MCF 10A (cell line): ENCODE measurements at regions of chr11 and their contacts with region 1.

Region 1: DNA sequence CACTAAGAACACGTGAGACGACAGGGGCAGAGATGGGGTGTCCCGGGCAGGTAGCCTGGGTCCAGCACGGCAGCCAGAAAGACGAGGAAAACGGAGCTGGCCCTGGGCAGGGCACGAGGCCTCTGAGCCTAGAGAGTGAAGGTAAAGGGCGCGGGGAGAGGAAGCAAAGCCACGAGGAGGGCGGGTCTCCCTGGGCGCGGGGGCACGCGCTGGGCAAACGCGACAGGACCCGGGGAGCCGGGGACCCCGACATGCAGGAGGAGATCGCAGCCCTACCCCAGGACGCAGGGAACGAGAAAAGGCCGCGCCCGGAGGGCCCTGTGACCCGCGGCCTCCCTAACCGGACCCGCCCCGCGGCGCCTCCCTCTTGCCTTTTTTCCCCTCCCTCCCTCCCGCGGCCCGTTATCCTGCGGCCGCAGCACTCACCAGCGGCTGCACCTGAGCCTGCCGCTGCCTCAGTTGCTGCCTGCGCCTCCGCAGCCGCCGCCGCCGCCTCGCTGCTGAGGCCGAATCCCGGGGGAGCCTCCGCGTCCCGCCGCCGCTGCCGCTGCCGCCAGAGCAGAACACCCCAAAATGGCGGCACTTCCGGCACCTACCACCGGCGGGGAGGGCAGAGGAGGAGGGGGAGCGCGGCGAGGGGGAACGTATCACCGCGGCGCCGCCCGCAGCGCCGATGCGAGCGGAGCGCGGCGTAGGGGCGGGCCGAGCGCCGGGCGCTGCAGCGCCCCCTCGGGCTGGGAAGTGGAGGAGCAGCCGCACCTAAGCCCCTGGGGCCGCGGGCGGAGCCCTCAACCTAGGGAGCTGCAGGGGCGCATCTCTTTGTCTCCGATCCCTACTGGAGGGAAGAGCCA is at the start of gene CELF1:
- DNase-seq: peak; percentile 92
- H3K4me3 Mint-ChIP-seq: peak within 1 kb of the TSS; percentile 100
- H3K27ac Mint-ChIP-seq: peak within 1 kb of the TSS; percentile 96
- H3K4me1 Mint-ChIP-seq: peaks cover 21% of the 10 kb centered on the region
- H3K27me3 Mint-ChIP-seq: no peaks in the 10 kb centered on the region
- CTCF ChIP-seq: peak; percentile 92
- total RNA-seq, gene CELF1: 173 and 189 TPM in 2 replicates

Region 2: GRCh38 chr11:47466701-47467250 is 86.0 kb before region 1 on chr11:
- CTCF ChIA-PET with region 1: interaction called, 3 read pairs
- POLR2A ChIA-PET with region 1: interaction called, 5 read pairs
- intact Hi-C with region 1: loop called (anchors 5 kb)
- DNase-seq: no peak
- H3K4me3 Mint-ChIP-seq: no peak overlapping the region
- H3K27ac Mint-ChIP-seq: peak overlapping the region; percentile 77
- H3K4me1 Mint-ChIP-seq: peaks cover 7% of the 10 kb centered on the region
- H3K27me3 Mint-ChIP-seq: no peaks in the 10 kb centered on the region
- CTCF ChIP-seq: no peak

Region 3: DNA sequence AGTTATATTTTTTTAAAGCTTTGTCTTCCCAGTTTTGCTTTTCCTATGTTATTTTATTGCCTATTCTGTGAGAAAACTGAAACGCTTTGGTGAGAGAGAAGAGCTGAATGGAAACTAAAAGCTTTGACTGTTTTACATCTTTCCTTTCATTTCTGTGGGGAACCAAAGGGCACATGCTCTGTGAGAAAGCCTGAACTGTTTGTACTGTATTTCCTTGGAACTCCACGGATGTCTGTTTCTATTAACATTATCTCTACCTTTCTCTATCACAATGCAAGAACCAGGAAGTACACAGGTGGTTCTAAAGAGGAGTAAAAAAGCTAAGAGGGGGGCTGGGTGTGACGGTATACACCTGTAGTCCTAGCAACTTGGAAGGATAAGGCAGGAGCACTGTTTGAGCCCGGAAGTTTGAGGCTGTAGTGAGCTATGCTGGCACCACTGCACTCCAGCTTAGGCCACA is 43.7 kb before region 1 on chr11:
- CTCF ChIA-PET with region 1: interaction called, 4 read pairs
- POLR2A ChIA-PET with region 1: interaction called, 21 read pairs
- intact Hi-C with region 1: no loop called
- DNase-seq: no peak
- H3K4me3 Mint-ChIP-seq: no peak overlapping the region
- H3K27ac Mint-ChIP-seq: peak overlapping the region; percentile 64
- H3K4me1 Mint-ChIP-seq: peaks cover 51% of the 10 kb centered on the region
- H3K27me3 Mint-ChIP-seq: no peaks in the 10 kb centered on the region
- CTCF ChIP-seq: no peak

Region 4: DNA sequence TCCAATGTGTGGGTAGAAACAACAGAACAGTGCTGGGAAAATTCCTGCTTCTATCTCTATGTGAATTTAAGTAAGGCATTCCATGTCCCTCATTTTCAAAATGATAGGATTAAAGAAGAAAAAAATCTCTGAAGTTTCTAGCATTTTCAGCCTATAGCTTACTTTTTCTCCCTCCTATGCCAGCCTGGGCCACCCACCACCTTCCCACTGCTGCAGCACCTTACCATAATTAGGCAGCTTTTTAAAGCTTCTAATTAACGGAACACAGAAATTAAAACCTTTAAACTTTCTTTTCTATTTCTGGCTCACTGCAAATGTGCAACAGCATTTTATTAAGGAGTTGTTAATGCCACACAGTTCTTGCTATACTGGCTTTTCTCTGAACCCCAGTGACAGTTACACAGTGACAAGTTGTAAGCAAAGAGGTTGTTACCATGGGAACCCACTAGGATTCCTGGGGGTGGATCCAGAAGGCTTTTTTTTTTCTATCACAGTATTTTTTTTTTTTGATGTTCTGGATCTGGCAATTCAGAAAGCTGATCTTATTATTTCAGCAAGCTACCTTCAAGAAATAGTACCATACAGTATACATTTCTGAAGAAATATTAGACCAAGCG is 20.1 kb before region 1 on chr11:
- CTCF ChIA-PET with region 1: interaction called, 7 read pairs
- POLR2A ChIA-PET with region 1: interaction called, 61 read pairs
- intact Hi-C with region 1: no loop called
- DNase-seq: no peak
- H3K4me3 Mint-ChIP-seq: no peak overlapping the region
- H3K27ac Mint-ChIP-seq: no peak overlapping the region
- H3K4me1 Mint-ChIP-seq: peaks cover 12% of the 10 kb centered on the region
- H3K27me3 Mint-ChIP-seq: no peaks in the 10 kb centered on the region
- CTCF ChIP-seq: no peak

Region 5: GRCh38 chr11:47565340-47566148 is 12.8 kb after region 1 on chr11 and contains the start of gene PTPMT1:
- CTCF ChIA-PET with region 1: interaction called, 22 read pairs
- POLR2A ChIA-PET with region 1: interaction called, 61 read pairs
- intact Hi-C with region 1: no loop called
- DNase-seq: peak; percentile 50
- H3K4me3 Mint-ChIP-seq: peak within 1 kb of the TSS; percentile 73
- H3K27ac Mint-ChIP-seq: no peak within 1 kb of the TSS
- H3K4me1 Mint-ChIP-seq: peaks cover under 1% of the 10 kb centered on the region
- H3K27me3 Mint-ChIP-seq: no peaks in the 10 kb centered on the region
- CTCF ChIP-seq: no peak
- total RNA-seq, gene PTPMT1: 44.6 and 49.0 TPM in 2 replicates